ENCODE measurements at regions of chr2 and their contacts with region 1.

Region 1: GRCh38 chr2:171703574-171704347 is 16.5 kb downstream of the DYNC1I2 start:
- DNase-seq: peak; percentile 52
- ATAC-seq: no peak
- H3K4me3 ChIP-seq: no peak overlapping the region
- H3K4me3 Mint-ChIP-seq: no peak overlapping the region
- H3K27ac ChIP-seq: no peak overlapping the region
- H3K27ac Mint-ChIP-seq: peak overlapping the region; percentile 81
- H3K4me1 ChIP-seq: peaks cover 7 to 8% of the 10 kb centered on the region in 2 donors
- H3K4me1 Mint-ChIP-seq: peaks cover 10% of the 10 kb centered on the region
- H3K27me3 ChIP-seq: no peaks in the 10 kb centered on the region
- H3K27me3 Mint-ChIP-seq: no peaks in the 10 kb centered on the region
- CTCF ChIP-seq: peak; percentile 71

Region 2: GRCh38 chr2:172113617-172114016 is 409.9 kb after region 1 on chr2:
- CTCF ChIA-PET with region 1: interaction called, 26 read pairs
- POLR2A ChIA-PET with region 1: no interaction called
- intact Hi-C with region 1: loop called (anchors 1 kb)
- DNase-seq: peak; percentile 14
- ATAC-seq: no peak
- H3K4me3 ChIP-seq: no peak overlapping the region
- H3K4me3 Mint-ChIP-seq: no peak overlapping the region
- H3K27ac ChIP-seq: no peak overlapping the region
- H3K27ac Mint-ChIP-seq: no peak overlapping the region
- H3K4me1 ChIP-seq: peaks cover 3 to 5% of the 10 kb centered on the region in 2 donors
- H3K4me1 Mint-ChIP-seq: peaks cover 2% of the 10 kb centered on the region
- H3K27me3 ChIP-seq: peaks cover 0 to 30% (median 18%) of the 10 kb centered on the region in 4 experiments
- H3K27me3 Mint-ChIP-seq: peaks cover 41% of the 10 kb centered on the region
- CTCF ChIP-seq: no peak